Right lobe of liver (tissue), 6 donors: ENCODE measurements at regions of chr10 and their contacts with region 1.

Region 1: DNA sequence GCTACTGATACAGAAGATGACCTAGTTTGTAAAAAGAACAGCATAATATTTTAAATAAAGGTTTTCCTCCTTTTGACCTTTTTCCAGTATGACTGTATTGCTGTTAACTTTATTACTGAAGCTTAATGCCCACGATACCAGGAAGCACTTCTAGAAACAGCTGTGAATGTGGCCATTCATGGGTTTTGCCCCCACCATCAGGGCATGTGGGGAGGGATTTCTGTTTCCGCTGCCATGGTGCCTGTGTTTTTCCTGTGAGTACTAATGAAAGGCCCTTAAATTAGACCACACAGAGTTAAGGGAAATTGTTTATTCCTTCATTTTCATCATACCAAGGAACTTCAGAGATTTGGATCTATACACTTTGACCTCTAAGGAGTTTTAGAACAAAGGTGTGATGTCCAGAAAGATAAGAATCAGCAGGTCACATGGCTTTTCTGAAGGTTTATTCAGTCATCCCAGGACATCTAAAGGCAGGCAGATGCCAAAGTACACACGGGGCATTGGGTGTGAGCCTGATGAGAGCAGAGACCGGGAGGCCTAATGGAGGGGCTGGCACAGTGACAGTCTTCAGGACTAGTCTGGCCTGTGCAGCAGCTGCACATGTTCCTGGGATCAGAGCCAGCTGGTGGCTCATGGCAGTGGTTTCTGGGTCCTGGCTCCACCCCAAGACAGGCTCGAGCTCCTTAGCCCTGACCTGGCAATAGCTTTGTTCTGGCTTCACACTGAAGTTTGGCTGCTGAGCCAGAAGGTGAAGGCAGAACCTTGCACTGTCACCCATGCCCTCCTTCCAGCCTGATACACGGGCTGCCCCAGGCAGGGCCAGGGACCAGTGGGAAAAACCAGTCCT is 190.9 kb downstream of the REEP3 start:
- DNase-seq: peak; percentile 94 to 98 (median 94)
- ATAC-seq: peak; percentile 86 to 96 (median 92)
- H3K4me3 ChIP-seq: no peak overlapping the region
- H3K27ac ChIP-seq: peak overlapping the region; percentile 44 to 80 (median 70)
- H3K4me1 ChIP-seq: peaks cover 0 to 38% (median 16%) of the 10 kb centered on the region in 4 donors
- H3K27me3 ChIP-seq: no peaks in the 10 kb centered on the region
- CTCF ChIP-seq: no peak
- POLR2A ChIP-seq: no peak

Region 2: GRCh38 chr10:63446716-63447440 is 265.2 kb before region 1 on chr10:
- intact Hi-C with region 1: no loop called
- DNase-seq: no peak
- ATAC-seq: no peak
- H3K4me3 ChIP-seq: no peak overlapping the region
- H3K27ac ChIP-seq: no peak overlapping the region
- H3K4me1 ChIP-seq: no peaks in the 10 kb centered on the region
- H3K27me3 ChIP-seq: no peaks in the 10 kb centered on the region
- CTCF ChIP-seq: no peak
- POLR2A ChIP-seq: no peak

Region 3: GRCh38 chr10:63629363-63630084 is 82.6 kb before region 1 on chr10:
- intact Hi-C with region 1: loop called in 1 of 2 experiments (anchors 5 kb)
- DNase-seq: peak; percentile 93 to 95 (median 94)
- ATAC-seq: peak; percentile 57 to 70 (median 62)
- H3K4me3 ChIP-seq: peak overlapping the region; percentile 71 to 75 (median 73)
- H3K27ac ChIP-seq: peak overlapping the region; percentile 90 to 93 (median 92)
- H3K4me1 ChIP-seq: peaks cover 0 to 20% (median 4%) of the 10 kb centered on the region in 4 donors
- H3K27me3 ChIP-seq: no peaks in the 10 kb centered on the region
- CTCF ChIP-seq: peak; percentile 67 to 80 (median 74)
- POLR2A ChIP-seq: no peak